Activated CD4-positive, alpha-beta memory T cell treated with anti-CD3 and anti-CD28 coated beads, Interleukin-2, amount 10 ng/mL, durations not matched to agents 7 days and 5 days (primary cell): ENCODE measurements at regions of chrX and their contacts with region 1.

Region 1: GRCh38 chrX:76279000-76279399 is 106.1 kb downstream of the PBDC1 start:
- DNase-seq: peak; percentile 41
- H3K4me3 Mint-ChIP-seq: no peak overlapping the region
- H3K27ac Mint-ChIP-seq: no peak overlapping the region
- H3K4me1 Mint-ChIP-seq: no peaks in the 10 kb centered on the region
- H3K27me3 Mint-ChIP-seq: no peaks in the 10 kb centered on the region

Region 2: DNA sequence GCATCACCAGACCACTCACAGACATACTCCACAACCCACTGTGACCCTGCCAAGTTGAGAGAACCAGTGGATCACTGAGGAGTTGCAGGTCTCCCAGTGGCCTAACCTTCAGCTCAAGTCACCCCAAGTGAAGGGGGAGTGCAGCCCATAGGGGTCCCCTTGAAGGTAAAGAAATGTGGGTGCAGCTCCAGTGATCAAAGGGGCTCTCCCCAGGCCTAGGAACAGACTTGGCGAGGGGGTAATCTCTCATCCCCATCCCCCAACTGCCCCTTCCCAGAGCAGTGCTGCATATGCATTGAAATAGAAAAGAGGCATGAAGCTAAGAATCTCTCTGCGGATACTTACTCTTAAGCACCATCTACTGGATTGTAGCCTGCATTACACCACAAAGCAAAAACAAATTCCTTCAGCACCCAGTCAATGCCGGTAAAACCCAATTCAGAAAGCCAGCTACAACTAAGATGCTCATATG is 175.5 kb after region 1 on chrX:
- CTCF ChIA-PET with region 1: interaction called, 23 read pairs
- POLR2A ChIA-PET with region 1: no interaction called
- DNase-seq: no peak
- H3K4me3 Mint-ChIP-seq: no peak overlapping the region
- H3K27ac Mint-ChIP-seq: no peak overlapping the region
- H3K4me1 Mint-ChIP-seq: peaks cover 2% of the 10 kb centered on the region
- H3K27me3 Mint-ChIP-seq: no peaks in the 10 kb centered on the region